A673 (cell line): ENCODE measurements at regions of chr21 and their contacts with region 1.

Region 1: DNA sequence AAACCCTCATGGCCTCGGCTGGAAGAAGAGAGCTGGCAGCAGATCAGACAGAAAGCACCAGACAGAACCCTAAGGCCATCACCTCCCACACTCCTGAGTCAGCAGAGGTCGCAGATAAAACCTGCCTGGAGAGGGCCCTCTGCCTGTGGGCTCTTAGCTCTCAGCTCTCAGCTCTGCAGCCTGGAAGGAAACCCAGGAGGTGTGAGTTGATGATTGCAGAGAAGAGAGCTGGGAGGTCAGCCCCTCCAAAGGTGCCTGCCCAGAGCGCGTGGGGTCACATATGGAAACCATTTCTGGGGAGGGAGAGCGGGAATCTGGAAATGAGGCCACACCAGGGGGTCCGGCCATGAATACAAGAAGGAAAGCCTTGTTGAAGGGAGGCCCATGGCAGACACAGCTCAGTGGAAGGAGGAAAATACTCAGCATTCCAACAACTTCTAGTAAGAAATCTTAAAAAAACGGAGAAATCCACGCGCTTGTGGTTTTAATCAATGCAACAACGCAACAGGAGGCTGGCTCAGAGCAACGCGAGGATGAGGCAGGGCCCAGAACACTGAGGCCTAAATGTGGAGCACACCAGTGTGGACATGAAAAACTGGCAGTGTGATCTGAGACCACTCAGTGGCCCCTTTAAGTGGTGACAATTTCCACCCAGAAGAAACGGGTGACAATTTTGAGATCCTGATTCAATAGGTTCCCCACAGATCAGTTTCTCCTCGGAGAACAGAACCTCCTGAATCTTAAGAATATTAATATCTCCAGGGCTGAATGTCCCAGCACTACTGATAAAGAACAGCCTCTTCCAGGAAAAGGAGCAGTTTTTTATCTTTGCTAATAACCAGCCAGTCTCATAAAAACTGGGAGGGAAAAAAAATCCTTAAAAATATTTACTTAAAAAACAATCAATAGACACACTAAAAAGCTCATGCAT is 45.7 kb downstream of the PSMG1 start:
- DNase-seq: no peak
- H3K4me3 ChIP-seq: no peak overlapping the region
- H3K27ac ChIP-seq: no peak overlapping the region
- H3K4me1 ChIP-seq: no peaks in the 10 kb centered on the region
- H3K27me3 ChIP-seq: no peaks in the 10 kb centered on the region
- CTCF ChIP-seq: no peak

Region 2: DNA sequence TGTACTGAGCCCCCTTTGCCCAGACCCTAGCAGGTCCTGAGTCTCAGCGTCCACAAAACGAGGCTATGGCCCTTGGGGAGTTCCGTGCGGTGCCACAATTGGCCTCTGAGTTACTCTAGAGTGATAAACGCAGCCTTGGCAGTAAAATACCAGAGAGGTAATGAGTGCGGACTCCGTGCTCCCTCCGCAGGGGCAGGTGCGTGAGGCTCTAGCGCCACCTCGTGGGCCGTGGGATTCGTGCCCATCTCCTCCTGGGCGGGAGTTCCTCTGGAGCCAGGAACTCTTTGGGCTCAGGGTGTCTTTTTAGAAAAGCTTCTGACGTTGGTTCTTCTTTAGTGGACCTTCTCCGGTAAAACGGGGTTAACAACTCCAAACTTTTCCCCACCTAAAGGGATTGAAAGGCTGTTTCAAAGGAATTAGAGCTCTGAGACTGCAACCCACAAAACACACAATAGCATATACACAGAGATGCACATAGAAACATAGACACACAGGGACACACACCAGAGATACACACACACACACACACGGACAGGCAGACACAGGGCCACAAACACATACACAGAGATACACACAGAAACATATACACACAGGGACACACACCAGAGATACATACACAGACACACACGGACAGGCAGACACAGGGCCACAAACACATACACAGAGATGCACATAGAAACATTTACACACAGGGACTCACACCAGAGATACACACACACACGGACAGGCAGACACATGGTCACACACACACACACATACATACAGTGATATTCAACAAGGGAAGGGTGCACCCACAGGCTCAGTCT is 781.3 kb before region 1 on chr21:
- CTCF ChIA-PET with region 1: no interaction called
- POLR2A ChIA-PET with region 1: no interaction called
- intact Hi-C with region 1: loop called (anchors 5 kb)
- DNase-seq: peak; percentile 78
- H3K4me3 ChIP-seq: no peak overlapping the region
- H3K27ac ChIP-seq: no peak overlapping the region
- H3K4me1 ChIP-seq: no peaks in the 10 kb centered on the region
- H3K27me3 ChIP-seq: peaks cover 14% of the 10 kb centered on the region
- CTCF ChIP-seq: peak; percentile 94

Region 3: GRCh38 chr21:38505654-38506515 is 631.6 kb before region 1 on chr21:
- CTCF ChIA-PET with region 1: interaction called, 3 read pairs
- POLR2A ChIA-PET with region 1: no interaction called
- intact Hi-C with region 1: loop called (anchors 2 kb)
- DNase-seq: peak; percentile 68
- H3K4me3 ChIP-seq: no peak overlapping the region
- H3K27ac ChIP-seq: no peak overlapping the region
- H3K4me1 ChIP-seq: no peaks in the 10 kb centered on the region
- H3K27me3 ChIP-seq: peaks cover 5% of the 10 kb centered on the region
- CTCF ChIP-seq: peak; percentile 67

Region 4: DNA sequence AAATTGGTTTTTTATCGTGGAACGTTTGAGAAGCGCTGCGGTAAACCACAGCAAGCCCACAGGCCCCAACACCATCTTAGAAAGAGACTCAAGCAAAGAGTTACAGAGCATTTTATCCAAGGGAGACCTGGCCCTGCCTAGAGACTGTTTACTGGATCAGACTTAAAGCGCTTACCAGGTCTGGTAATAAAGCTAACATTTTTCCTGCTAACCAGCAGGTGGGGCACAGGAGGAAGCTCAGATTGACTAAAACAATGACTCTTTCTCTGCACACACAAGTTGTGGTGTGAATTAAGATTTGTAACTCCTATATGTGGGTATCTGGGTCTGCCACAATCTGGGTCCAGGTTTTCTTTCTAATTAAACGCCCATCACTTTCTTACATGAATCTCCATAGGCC is 468.3 kb before region 1 on chr21:
- CTCF ChIA-PET with region 1: no interaction called
- POLR2A ChIA-PET with region 1: no interaction called
- intact Hi-C with region 1: loop called (anchors 1 kb)
- DNase-seq: peak; percentile 46
- H3K4me3 ChIP-seq: no peak overlapping the region
- H3K27ac ChIP-seq: no peak overlapping the region
- H3K4me1 ChIP-seq: no peaks in the 10 kb centered on the region
- H3K27me3 ChIP-seq: peaks cover 5% of the 10 kb centered on the region
- CTCF ChIP-seq: peak; percentile 52

Region 5: GRCh38 chr21:38733973-38734546 is 403.5 kb before region 1 on chr21:
- CTCF ChIA-PET with region 1: no interaction called
- POLR2A ChIA-PET with region 1: no interaction called
- intact Hi-C with region 1: loop called (anchors 1 kb)
- DNase-seq: peak; percentile 64
- H3K4me3 ChIP-seq: peak overlapping the region; percentile 37
- H3K27ac ChIP-seq: no peak overlapping the region
- H3K4me1 ChIP-seq: peaks cover 8% of the 10 kb centered on the region
- H3K27me3 ChIP-seq: peaks cover 11% of the 10 kb centered on the region
- CTCF ChIP-seq: peak; percentile 95

Region 6: DNA sequence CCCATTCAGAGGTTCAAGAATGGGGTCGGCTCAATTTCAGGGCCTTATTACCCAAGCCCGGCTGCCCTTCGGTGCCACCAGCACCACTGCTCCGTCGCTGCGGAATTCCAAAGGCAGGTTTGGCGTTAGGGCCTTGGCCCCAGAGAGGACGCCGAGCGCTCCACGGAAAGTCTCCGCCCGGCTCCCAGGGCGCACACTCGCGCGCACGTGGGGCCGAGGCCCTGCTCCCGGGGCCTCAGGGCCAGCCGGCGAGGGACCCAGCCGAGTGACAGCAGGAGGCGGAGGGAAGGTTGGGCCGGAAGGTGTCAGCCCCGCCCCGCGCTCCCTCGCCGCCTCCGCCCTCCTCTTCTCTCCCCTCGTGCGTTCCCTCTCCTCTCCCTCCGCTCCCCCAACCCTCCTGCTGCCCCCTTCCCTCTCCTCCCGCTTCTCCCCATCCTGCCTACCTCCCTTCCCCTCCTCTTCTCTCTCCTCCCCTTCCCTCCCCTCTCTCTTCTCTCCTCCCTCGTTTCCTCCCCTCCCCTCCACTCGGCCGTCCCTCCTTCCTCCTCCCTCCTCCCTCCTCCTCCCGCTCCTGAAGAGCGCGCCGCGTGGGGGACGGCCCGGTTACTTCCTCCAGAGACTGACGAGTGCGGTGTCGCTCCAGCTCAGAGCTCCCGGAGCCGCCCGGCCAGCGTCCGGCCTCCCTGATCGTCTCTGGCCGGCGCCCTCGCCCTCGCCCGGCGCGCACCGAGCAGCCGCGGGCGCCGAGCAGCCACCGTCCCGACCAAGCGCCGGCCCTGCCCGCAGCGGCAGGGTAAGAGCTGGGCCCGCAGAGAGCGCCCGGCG is 332.0 kb before region 1 on chr21 and contains the start of gene ETS2:
- CTCF ChIA-PET with region 1: no interaction called
- POLR2A ChIA-PET with region 1: no interaction called
- intact Hi-C with region 1: loop called (anchors 10 kb)
- DNase-seq: peak; percentile 94
- H3K4me3 ChIP-seq: peak within 1 kb of the TSS; percentile 87
- H3K27ac ChIP-seq: peak within 1 kb of the TSS; percentile 88
- H3K4me1 ChIP-seq: peaks cover 19% of the 10 kb centered on the region
- H3K27me3 ChIP-seq: no peaks in the 10 kb centered on the region
- CTCF ChIP-seq: no peak
- total RNA-seq, gene ETS2: 35.1 and 45.6 TPM in 2 replicates

Region 7: DNA sequence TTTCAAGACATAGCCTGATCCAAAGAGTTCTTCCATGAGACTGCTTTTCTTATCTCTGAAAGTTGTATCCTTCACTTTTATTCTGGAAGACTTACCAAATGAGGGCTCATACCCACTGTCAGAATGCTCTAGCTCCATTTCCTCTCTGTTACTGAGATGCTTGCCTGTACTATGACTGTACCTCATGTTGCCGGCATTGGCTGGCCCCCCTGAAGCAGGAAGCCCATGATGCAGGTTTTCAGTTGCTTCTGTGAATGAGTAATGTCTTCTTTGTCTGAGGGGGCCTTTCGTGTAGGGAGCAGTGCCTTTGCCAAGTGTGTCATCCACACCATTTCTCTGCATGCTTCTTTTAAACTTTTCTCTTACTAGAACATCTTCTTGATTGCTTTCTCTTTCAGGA is 268.6 kb after region 1 on chr21:
- CTCF ChIA-PET with region 1: no interaction called
- POLR2A ChIA-PET with region 1: no interaction called
- intact Hi-C with region 1: no loop called
- DNase-seq: no peak
- H3K4me3 ChIP-seq: no peak overlapping the region
- H3K27ac ChIP-seq: no peak overlapping the region
- H3K4me1 ChIP-seq: no peaks in the 10 kb centered on the region
- H3K27me3 ChIP-seq: no peaks in the 10 kb centered on the region
- CTCF ChIP-seq: no peak